ENCODE measurements at regions of chr7 and their contacts with region 1.

Region 1: GRCh38 chr7:113421696-113422330 is 303.5 kb upstream of the SMIM30 start:
- DNase-seq: peak; percentile 66
- H3K4me3 ChIP-seq: no peak overlapping the region
- H3K27ac ChIP-seq: no peak overlapping the region
- H3K4me1 ChIP-seq: no peaks in the 10 kb centered on the region
- H3K27me3 ChIP-seq: no peaks in the 10 kb centered on the region
- CTCF ChIP-seq: peak; percentile 86 to 92

Region 2: GRCh38 chr7:112898432-112899290 is 523.2 kb before region 1 on chr7:
- CTCF ChIA-PET with region 1: no interaction called
- dilution Hi-C with region 1: no loop called
- in situ Hi-C with region 1: no loop called
- intact Hi-C with region 1: loop called (anchors 1 kb)
- DNase-seq: peak; percentile 62
- H3K4me3 ChIP-seq: no peak overlapping the region
- H3K27ac ChIP-seq: no peak overlapping the region
- H3K4me1 ChIP-seq: no peaks in the 10 kb centered on the region
- H3K27me3 ChIP-seq: no peaks in the 10 kb centered on the region
- CTCF ChIP-seq: peak; percentile 81 to 89

Region 3: GRCh38 chr7:113015032-113015645 is 406.7 kb before region 1 on chr7:
- CTCF ChIA-PET with region 1: no interaction called
- dilution Hi-C with region 1: no loop called
- in situ Hi-C with region 1: no loop called
- intact Hi-C with region 1: loop called (anchors 2 kb)
- DNase-seq: peak; percentile 27
- H3K4me3 ChIP-seq: no peak overlapping the region
- H3K27ac ChIP-seq: no peak overlapping the region
- H3K4me1 ChIP-seq: peaks cover 12% of the 10 kb centered on the region
- H3K27me3 ChIP-seq: no peaks in the 10 kb centered on the region
- CTCF ChIP-seq: peak; percentile 42 to 58

Region 4: GRCh38 chr7:113159746-113160339 is 262.0 kb before region 1 on chr7:
- CTCF ChIA-PET with region 1: no interaction called
- dilution Hi-C with region 1: no loop called
- in situ Hi-C with region 1: loop called in 1 of 2 experiments (anchors 25 kb)
- intact Hi-C with region 1: loop called (anchors 1 kb)
- DNase-seq: peak; percentile 21
- H3K4me3 ChIP-seq: no peak overlapping the region
- H3K27ac ChIP-seq: no peak overlapping the region
- H3K4me1 ChIP-seq: no peaks in the 10 kb centered on the region
- H3K27me3 ChIP-seq: no peaks in the 10 kb centered on the region
- CTCF ChIP-seq: peak; percentile 59 to 82

Region 5: DNA sequence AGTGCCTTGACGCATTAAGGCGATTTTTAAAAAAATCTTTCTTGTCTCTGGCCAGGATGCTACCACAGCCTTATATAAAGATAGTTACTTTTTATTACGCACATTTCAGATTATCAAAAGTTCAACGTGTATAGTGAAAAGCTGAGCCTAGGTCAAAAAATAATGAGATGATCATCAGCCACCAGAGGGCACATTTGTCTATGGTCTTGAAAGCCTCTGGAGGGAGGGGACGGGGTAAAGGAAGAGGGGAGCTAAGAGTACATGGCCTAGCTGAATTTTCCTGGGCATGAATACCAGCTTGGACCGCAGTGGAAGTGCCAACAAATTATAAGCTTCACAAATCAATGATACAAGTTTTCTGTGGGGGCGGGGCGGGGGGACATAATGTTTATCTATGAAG is 17.6 kb before region 1 on chr7:
- CTCF ChIA-PET with region 1: interaction called, 4 read pairs
- dilution Hi-C with region 1: no loop called
- in situ Hi-C with region 1: no loop called
- intact Hi-C with region 1: loop called (anchors 2 kb)
- DNase-seq: no peak
- H3K4me3 ChIP-seq: no peak overlapping the region
- H3K27ac ChIP-seq: no peak overlapping the region
- H3K4me1 ChIP-seq: no peaks in the 10 kb centered on the region
- H3K27me3 ChIP-seq: no peaks in the 10 kb centered on the region
- CTCF ChIP-seq: peak; percentile 22 to 43

Region 6: DNA sequence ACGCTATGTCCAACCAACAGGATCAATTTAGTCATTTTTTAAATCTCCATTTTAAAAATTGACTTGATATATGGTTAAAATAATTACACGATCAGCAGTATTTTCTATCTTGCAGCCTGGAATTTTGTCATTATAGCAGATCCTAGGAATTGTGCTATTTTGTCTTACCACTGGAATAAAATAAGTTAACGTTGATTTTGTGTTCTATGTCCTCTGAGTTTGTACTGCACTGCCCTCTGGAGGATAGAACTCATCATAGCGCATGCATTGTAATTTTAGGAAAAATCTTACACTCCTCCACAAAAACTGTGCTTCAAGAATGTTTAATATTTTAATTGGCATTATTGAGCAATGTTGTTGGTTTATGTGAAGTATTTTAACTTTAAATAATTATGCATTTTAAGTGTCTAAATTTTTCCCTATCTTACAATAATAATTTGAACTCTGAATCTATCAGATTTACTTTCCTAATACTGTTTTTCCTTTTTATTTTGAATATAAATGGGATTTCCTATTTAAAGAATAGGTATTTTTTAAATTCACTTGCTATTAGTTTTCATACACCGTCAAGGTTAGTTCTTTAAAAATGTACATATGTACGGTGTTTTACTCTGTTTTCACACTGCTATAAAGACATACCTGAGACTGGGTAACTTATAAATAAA is 276.9 kb after region 1 on chr7:
- CTCF ChIA-PET with region 1: no interaction called
- dilution Hi-C with region 1: no loop called
- in situ Hi-C with region 1: loop called in 1 of 2 experiments (anchors 25 kb)
- intact Hi-C with region 1: loop called (anchors 1 kb)
- DNase-seq: peak; percentile 16
- H3K4me3 ChIP-seq: no peak overlapping the region
- H3K27ac ChIP-seq: no peak overlapping the region
- H3K4me1 ChIP-seq: no peaks in the 10 kb centered on the region
- H3K27me3 ChIP-seq: no peaks in the 10 kb centered on the region
- CTCF ChIP-seq: peak; percentile 80 to 84

Region 7: DNA sequence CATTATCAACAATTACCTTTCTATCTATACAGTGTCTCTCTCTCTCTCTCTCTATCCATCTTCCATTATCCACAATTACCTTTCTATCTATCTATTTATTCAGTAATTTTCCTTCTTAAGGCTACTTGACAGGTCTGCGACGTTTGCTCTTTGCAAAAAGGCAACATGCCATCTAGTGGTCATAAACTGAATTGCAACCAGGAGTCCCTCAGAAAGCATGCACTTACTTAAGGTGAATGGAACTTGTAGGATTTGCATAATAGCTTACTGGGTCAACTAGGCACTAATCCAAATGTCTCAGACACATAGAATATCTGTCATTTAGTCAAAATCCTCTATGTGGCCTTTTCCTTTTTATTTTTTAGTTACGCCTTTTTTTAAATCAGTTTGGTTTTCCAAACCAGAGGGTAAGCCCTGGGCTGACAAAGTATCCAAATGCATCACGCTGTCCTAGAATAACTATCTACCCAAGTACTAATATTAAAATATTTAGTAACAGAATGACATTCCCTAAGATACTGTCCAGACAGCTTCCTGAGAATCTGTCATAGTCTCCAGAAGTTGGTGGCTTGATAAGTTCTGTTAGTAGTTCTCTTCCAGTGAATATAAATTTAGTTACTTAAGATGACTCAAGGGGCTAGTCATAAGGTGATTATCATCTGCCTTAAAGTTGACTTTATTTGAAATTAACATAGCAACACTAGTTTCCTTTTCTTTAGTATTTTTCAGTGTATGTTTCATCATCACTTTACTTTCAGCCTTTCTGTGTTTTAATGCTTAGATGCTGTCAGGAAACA is 288.7 kb after region 1 on chr7:
- CTCF ChIA-PET with region 1: no interaction called
- dilution Hi-C with region 1: no loop called
- in situ Hi-C with region 1: no loop called
- intact Hi-C with region 1: loop called (anchors 5 kb)
- DNase-seq: peak; percentile 72
- H3K4me3 ChIP-seq: no peak overlapping the region
- H3K27ac ChIP-seq: no peak overlapping the region
- H3K4me1 ChIP-seq: no peaks in the 10 kb centered on the region
- H3K27me3 ChIP-seq: no peaks in the 10 kb centered on the region
- CTCF ChIP-seq: peak; percentile 93 to 98